AG04449 (cell line): ENCODE measurements at regions of chr1 and their contacts with region 1.

Region 1: DNA sequence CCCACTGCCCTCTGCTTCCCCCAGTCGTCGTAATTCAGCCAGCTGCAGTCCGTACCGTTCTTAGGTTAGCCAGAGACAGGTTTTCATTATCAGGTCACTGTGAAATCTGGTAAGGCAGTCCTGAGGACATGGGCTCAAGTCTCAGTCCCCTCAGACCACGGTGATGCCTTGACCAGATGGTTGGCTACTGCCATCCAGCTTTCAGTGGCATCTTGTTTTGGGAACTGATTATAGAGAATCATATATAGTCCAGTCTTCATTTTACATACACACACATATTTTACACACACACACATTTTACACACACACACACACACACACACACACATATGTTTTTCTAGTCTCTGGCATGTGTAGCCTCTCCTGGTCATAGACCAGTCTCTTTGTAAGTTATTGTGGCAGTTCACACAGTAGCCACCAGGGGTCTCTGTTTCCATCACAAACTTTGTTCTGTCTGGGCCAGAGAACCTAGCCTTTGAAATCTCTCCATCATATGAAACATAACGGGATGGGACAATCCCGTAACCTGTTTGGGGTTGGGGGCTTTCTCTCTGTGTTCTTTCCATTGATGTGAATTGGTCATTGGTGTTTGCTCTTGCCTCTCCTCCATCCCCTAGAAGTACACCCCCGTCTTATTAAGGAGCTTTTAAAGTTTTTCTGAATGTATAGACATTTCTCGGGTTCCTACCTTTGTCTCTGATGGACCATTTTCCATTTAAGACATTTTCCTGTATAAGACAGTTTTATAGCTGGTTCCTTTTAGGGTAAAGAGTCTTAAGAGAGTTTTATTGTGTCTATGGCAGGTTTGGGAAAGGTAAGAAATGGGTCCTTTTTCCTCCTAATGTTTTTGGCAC is 8.4 kb upstream of the IKBKE start:
- DNase-seq: no peak
- H3K4me3 ChIP-seq: no peak overlapping the region
- CTCF ChIP-seq: peak; percentile 62

Region 2: GRCh38 chr1:206430031-206430983 is 31.5 kb before region 1 on chr1:
- CTCF ChIA-PET with region 1: interaction called, 11 read pairs
- POLR2A ChIA-PET with region 1: no interaction called
- DNase-seq: peak; percentile 62
- H3K4me3 ChIP-seq: no peak overlapping the region
- CTCF ChIP-seq: no peak

Region 3: GRCh38 chr1:206445116-206445515 is 16.7 kb before region 1 on chr1:
- CTCF ChIA-PET with region 1: interaction called, 48 read pairs
- POLR2A ChIA-PET with region 1: no interaction called
- DNase-seq: no peak
- H3K4me3 ChIP-seq: no peak overlapping the region
- CTCF ChIP-seq: no peak

Region 4: DNA sequence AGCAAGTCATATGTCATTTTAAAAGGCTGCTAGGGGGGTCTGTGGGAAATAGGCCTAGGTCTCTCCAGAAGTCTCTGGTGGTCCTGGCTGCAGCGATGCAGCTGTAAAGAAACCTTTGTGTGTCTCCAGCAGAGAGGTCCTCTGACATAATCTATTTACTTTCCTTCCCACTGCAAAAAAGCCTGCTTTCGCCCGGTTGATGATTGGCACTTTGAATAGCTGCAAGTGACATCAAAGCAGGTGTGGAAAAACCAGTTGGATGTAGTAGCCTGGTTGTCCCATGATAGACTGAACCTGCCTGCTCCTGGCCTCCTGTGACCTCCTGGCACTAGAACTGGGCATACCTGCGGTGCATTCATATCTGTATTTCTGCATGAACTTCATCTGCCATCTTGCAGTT is 59.3 kb after region 1 on chr1:
- CTCF ChIA-PET with region 1: no interaction called
- POLR2A ChIA-PET with region 1: no interaction called
- DNase-seq: no peak
- H3K4me3 ChIP-seq: no peak overlapping the region
- CTCF ChIP-seq: no peak

Region 5: DNA sequence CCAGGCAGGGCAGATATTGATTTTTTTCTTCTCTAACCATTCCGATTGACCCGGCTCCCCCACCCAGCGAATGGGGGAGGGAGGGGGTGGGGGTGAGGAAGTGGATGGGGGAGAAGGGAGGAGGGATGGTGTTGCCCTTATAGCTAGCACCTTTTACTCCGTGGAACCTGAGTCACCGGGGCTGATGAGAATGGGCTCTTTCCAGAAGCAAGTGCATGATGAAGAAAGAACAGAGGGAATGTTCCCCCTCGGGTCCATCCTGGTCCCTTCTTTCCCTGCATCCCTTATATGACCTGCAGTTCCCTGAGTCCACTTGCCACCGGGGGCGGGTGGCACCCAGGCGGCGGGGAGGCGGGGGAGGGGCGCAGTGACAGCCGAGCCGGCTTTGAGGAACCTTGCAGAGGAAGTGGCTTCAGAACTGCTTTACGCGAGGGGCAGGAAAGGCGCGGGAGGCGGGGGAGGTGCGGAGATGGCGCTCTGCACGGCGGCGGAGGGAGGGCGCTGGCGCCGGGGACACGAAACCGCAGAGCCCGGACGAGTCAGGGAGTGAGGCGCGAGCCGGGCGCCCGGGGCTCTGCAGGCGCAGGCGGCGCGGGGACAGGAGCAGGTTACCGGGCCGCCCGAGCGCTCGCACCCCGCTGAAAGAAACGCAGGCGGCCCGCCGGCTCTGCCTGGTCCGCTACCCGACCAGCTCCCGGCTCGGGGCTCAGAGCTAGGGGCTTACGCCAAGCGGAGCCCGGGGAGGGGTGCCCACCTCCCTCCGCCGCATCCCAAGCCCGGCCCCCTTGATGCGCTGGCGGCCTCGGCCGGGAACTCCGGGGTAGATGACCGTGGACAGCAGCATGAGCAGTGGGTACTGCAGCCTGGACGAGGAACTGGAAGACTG is 95.2 kb after region 1 on chr1:
- CTCF ChIA-PET with region 1: no interaction called
- POLR2A ChIA-PET with region 1: no interaction called
- DNase-seq: no peak
- H3K4me3 ChIP-seq: peak overlapping the region; percentile 53
- CTCF ChIP-seq: no peak